ENCODE measurements at regions of chr7 and their contacts with region 1.

Region 1: GRCh38 chr7:35729061-35729783 is 34.3 kb upstream of the HERPUD2 start:
- DNase-seq: peak; percentile 82
- ATAC-seq: peak; percentile 80
- H3K4me3 Mint-ChIP-seq: no peak overlapping the region
- H3K27ac Mint-ChIP-seq: peak overlapping the region; percentile 70
- H3K4me1 Mint-ChIP-seq: peaks cover 66% of the 10 kb centered on the region
- H3K27me3 Mint-ChIP-seq: no peaks in the 10 kb centered on the region
- CTCF ChIP-seq: no peak

Region 2: DNA sequence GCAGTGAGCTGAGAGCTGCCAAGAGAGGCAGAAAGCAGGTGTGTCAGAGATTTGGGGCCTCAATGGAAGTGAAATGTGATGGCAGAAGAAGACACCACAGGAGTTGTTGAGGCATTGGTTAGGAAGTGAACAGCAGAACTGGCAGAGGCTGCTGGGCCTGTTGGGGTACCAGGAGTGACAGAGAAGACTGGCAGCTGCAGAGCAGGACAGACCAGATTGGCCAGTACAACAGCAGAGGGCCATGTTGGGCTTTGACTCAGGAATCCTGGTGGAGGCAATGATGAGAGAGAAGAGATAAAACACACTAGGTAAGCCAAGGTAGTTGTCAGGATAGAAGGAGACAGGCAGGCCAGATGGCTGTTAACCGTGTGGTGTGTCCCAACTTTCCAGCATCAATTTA is 14.4 kb before region 1 on chr7:
- CTCF ChIA-PET with region 1: interaction called, 42 read pairs
- POLR2A ChIA-PET with region 1: interaction called, 4 read pairs
- intact Hi-C with region 1: no loop called
- DNase-seq: no peak
- ATAC-seq: peak; percentile 34
- H3K4me3 Mint-ChIP-seq: no peak overlapping the region
- H3K27ac Mint-ChIP-seq: no peak overlapping the region
- H3K4me1 Mint-ChIP-seq: peaks cover 12% of the 10 kb centered on the region
- H3K27me3 Mint-ChIP-seq: no peaks in the 10 kb centered on the region
- CTCF ChIP-seq: no peak

Region 3: DNA sequence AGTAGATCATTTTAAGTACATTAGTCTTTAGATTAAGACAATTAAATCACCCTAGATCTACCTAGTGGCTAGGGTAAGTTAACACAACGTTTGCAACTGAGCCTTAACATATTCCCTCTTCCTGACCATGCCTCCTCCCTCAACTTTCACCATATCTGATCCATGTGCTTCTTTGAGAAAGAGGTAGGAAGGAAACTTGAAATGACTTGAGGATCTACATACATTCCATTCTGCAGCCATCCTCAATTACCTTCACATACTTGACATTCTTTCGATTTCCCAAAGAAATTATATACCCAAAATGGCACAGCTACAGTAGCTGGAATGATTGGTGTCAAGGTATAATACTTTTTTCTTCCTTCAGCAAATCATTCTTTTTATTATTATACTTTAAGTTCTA is 58.7 kb after region 1 on chr7:
- CTCF ChIA-PET with region 1: no interaction called
- POLR2A ChIA-PET with region 1: no interaction called
- intact Hi-C with region 1: no loop called
- DNase-seq: no peak
- ATAC-seq: no peak
- H3K4me3 Mint-ChIP-seq: no peak overlapping the region
- H3K27ac Mint-ChIP-seq: no peak overlapping the region
- H3K4me1 Mint-ChIP-seq: no peaks in the 10 kb centered on the region
- H3K27me3 Mint-ChIP-seq: no peaks in the 10 kb centered on the region
- CTCF ChIP-seq: no peak

Region 4: DNA sequence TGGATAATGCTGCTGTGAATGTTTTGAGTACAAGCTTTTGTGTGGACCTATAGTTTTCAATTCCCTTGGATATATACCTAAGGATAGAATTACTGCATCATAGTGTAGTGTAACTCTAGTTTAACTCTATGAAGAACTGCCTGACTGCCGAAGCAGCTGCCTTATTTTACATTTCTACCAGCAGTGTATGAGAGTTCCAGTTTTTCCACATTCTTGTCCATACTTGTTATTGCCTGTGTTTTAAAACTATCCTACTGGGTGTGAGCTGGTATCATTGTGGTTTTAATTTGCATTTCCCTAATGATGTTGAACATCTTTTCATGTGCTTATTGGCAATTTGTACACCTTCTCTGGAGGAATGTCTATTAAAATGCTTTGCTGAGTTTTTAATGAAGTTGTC is 87.3 kb after region 1 on chr7:
- CTCF ChIA-PET with region 1: no interaction called
- POLR2A ChIA-PET with region 1: no interaction called
- intact Hi-C with region 1: no loop called
- DNase-seq: no peak
- ATAC-seq: no peak
- H3K4me3 Mint-ChIP-seq: no peak overlapping the region
- H3K27ac Mint-ChIP-seq: peak overlapping the region; percentile 47
- H3K4me1 Mint-ChIP-seq: peaks cover 78% of the 10 kb centered on the region
- H3K27me3 Mint-ChIP-seq: no peaks in the 10 kb centered on the region
- CTCF ChIP-seq: no peak

Region 5: DNA sequence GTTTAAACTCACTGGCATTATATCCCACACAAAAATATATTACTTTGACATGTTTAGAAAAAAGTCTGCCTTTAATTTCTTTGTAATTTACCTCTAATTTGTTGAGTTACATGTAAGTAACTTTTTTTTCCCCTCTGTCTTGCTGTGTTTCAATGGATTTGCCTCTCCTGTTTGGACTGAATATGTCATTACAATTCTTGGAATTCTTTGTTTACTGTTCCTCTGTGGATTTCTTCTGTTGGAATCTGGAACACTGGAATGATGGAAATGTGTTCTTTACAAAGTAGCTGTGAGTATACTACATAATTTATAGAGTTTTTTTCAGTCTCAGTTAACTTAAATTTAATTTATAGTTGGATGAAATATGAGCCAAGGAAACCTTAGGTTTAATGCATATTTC is 102.0 kb after region 1 on chr7:
- CTCF ChIA-PET with region 1: no interaction called
- POLR2A ChIA-PET with region 1: no interaction called
- intact Hi-C with region 1: no loop called
- DNase-seq: no peak
- ATAC-seq: no peak
- H3K4me3 Mint-ChIP-seq: no peak overlapping the region
- H3K27ac Mint-ChIP-seq: no peak overlapping the region
- H3K4me1 Mint-ChIP-seq: peaks cover 58% of the 10 kb centered on the region
- H3K27me3 Mint-ChIP-seq: no peaks in the 10 kb centered on the region
- CTCF ChIP-seq: no peak

Region 6: GRCh38 chr7:35906191-35906908 is 177.1 kb after region 1 on chr7:
- CTCF ChIA-PET with region 1: interaction called, 11 read pairs
- POLR2A ChIA-PET with region 1: no interaction called
- intact Hi-C with region 1: no loop called
- DNase-seq: peak; percentile 75
- ATAC-seq: peak; percentile 87
- H3K4me3 Mint-ChIP-seq: no peak overlapping the region
- H3K27ac Mint-ChIP-seq: peak overlapping the region; percentile 49
- H3K4me1 Mint-ChIP-seq: peaks cover 9% of the 10 kb centered on the region
- H3K27me3 Mint-ChIP-seq: no peaks in the 10 kb centered on the region
- CTCF ChIP-seq: peak; percentile 92